ENCODE measurements at regions of chr2 and their contacts with region 1.

Region 1: GRCh38 chr2:44361330-44362206 is at the starts of genes CAMKMT and PREPL:
- DNase-seq: peak; percentile 97 to 99 (median 99)
- H3K4me3 ChIP-seq: peak within 1 kb of the TSS; percentile 94
- H3K4me3 Mint-ChIP-seq: peak within 1 kb of the TSS; percentile 92 to 98 (median 98)
- H3K27ac ChIP-seq: peak within 1 kb of the TSS; percentile 99
- H3K27ac Mint-ChIP-seq: peak within 1 kb of the TSS; percentile 99 to 100 (median 100)
- H3K4me1 ChIP-seq: peaks cover 30% of the 10 kb centered on the region
- H3K4me1 Mint-ChIP-seq: peaks cover 47 to 74% (median 59%) of the 10 kb centered on the region in 3 donors
- H3K27me3 ChIP-seq: no peaks in the 10 kb centered on the region
- H3K27me3 Mint-ChIP-seq: no peaks in the 10 kb centered on the region
- total RNA-seq, gene CAMKMT: 11.4 to 11.7 TPM
- total RNA-seq, gene PREPL: 37.0 to 37.5 TPM

Region 2: DNA sequence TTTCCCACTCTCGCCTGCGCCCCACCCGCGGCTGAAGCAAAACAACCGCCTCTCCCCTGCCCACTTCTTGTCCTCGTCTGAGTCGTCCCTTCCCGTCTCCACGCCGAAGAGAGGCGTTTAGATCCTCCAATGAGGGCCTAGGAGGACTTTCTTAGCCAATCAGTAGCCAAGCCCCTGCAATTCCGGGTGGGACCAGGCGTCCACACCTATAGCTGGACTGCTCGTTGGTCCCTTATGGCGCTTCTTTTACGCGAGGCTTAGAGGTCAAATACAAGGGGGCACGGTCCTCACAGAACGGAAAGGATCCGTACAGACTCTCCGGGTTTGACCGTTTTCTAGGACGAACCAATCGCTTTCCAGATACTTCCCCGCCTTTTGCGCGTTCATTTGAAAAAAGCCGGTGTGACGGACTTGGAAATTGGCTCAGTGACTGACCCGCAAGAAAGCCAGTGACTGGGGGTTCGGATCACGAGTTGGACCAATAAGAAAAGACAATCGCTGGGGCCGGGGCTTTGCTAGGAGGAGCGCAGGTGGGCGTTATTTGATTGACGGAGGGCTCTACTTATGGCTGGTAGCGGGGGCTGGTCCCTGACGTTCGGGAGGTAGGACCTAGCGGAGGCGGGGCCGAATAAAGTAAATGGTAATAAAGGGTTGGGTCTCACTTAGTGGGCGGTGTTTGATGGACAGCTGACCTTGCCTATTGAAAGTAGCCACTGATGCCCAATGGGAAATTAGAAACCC is 193.5 kb before region 1 on chr2:
- CTCF ChIA-PET with region 1: no interaction called
- POLR2A ChIA-PET with region 1: interaction called, 27 read pairs
- DNase-seq: peak; percentile 93 to 99 (median 98)
- H3K4me3 ChIP-seq: peak overlapping the region; percentile 87
- H3K4me3 Mint-ChIP-seq: peak overlapping the region; percentile 85 to 99 (median 93)
- H3K27ac ChIP-seq: peak overlapping the region; percentile 99
- H3K27ac Mint-ChIP-seq: peak overlapping the region; percentile 98 to 100 (median 99)
- H3K4me1 ChIP-seq: peaks cover 30% of the 10 kb centered on the region
- H3K4me1 Mint-ChIP-seq: peaks cover 38 to 43% (median 39%) of the 10 kb centered on the region in 3 donors
- H3K27me3 ChIP-seq: no peaks in the 10 kb centered on the region
- H3K27me3 Mint-ChIP-seq: no peaks in the 10 kb centered on the region